ENCODE measurements at regions of chr7 and their contacts with region 1.

Region 1: DNA sequence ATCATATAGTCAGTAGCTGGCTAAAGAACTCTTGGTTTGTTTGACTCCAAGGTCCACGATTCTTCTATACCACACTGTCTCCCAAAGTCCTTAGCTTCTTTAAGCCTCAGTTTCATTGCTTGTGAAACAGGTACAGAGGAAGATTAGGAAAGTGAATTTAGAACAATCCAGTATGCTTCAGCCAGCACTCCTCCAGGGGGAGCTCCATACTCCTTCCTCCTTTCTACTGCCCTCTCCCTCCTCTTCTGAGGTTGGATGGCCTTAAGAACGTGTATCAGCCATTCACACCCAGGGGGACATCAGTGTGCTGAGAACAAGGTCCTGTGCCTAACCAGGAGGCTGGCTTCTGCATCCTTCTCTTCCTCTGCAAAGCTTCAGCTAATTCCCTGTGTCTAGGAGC is 54.8 kb upstream of the CALD1 start:
- DNase-seq: peak; percentile 56
- H3K4me3 ChIP-seq: no peak overlapping the region
- H3K27ac ChIP-seq: no peak overlapping the region
- H3K4me1 ChIP-seq: no peaks in the 10 kb centered on the region
- H3K27me3 ChIP-seq: no peaks in the 10 kb centered on the region
- CTCF ChIP-seq: peak; percentile 58 to 72
- POLR2A ChIP-seq: no peak

Region 2: GRCh38 chr7:134480736-134481135 is 243.9 kb before region 1 on chr7:
- CTCF ChIA-PET with region 1: no interaction called
- POLR2A ChIA-PET with region 1: no interaction called
- dilution Hi-C with region 1: no loop called
- intact Hi-C with region 1: no loop called
- DNase-seq: peak; percentile 71
- H3K4me3 ChIP-seq: no peak overlapping the region
- H3K27ac ChIP-seq: peak overlapping the region; percentile 9
- H3K4me1 ChIP-seq: peaks cover 16% of the 10 kb centered on the region
- H3K27me3 ChIP-seq: no peaks in the 10 kb centered on the region
- CTCF ChIP-seq: no peak
- POLR2A ChIP-seq: no peak

Region 3: GRCh38 chr7:134669845-134670373 is 54.7 kb before region 1 on chr7:
- CTCF ChIA-PET with region 1: no interaction called
- POLR2A ChIA-PET with region 1: no interaction called
- dilution Hi-C with region 1: no loop called
- intact Hi-C with region 1: loop called (anchors 1 kb)
- DNase-seq: peak; percentile 99
- H3K4me3 ChIP-seq: peak overlapping the region in 1 of 3 experiments; percentile 10
- H3K27ac ChIP-seq: peak overlapping the region; percentile 100
- H3K4me1 ChIP-seq: peaks cover 50% of the 10 kb centered on the region
- H3K27me3 ChIP-seq: no peaks in the 10 kb centered on the region
- CTCF ChIP-seq: no peak
- POLR2A ChIP-seq: no peak

Region 4: DNA sequence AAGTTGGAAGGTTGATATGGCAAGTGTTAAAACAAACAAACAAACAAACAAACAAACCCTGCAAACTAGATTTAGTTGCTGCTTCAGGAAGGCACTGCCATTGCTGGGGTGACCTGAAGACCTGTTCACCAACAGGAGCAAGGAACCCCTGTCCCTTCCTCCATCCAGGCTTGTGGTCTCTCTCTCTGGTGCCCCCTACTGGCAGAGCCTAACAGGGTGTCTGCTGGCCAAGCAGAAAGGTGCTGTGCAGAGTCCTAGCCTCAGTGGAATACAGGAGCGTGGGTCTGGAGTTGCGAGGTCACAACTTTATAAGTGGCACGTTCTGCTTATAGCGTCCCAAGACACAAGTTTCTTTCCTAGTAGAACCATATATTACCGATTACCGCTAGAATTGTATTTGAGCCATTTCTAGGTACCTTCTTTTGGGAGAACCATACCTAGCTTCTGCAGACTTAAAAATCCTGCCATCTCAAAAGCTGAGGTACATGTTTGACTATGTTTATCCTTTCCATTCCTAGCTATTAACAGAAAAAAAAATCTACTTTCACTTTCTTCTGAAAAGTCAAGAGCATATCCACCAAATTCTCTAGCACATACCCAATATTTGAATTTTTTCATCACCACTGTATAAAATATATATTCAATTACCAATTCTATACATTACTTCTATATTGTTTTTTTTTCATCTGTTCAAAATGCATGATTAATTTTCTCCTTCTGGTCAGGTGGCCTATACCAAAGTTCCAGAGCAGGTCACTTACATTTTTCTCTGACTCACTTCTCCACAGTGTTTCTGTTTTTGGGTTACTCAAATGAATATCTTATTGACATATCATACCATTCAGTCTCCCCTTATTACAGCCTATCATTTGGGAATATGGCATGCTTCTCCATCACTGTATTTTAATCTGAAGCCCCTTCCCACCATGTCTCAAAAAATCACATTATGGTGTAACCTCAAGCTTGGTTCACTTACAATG is 25.8 kb after region 1 on chr7:
- CTCF ChIA-PET with region 1: interaction called, 39 read pairs
- POLR2A ChIA-PET with region 1: no interaction called
- dilution Hi-C with region 1: no loop called
- intact Hi-C with region 1: loop called (anchors 1 kb)
- DNase-seq: peak; percentile 51
- H3K4me3 ChIP-seq: no peak overlapping the region
- H3K27ac ChIP-seq: no peak overlapping the region
- H3K4me1 ChIP-seq: no peaks in the 10 kb centered on the region
- H3K27me3 ChIP-seq: no peaks in the 10 kb centered on the region
- CTCF ChIP-seq: peak; percentile 68 to 76
- POLR2A ChIP-seq: no peak

Region 5: GRCh38 chr7:134891262-134891695 is 166.7 kb after region 1 on chr7:
- CTCF ChIA-PET with region 1: interaction called, 7 read pairs
- POLR2A ChIA-PET with region 1: no interaction called
- dilution Hi-C with region 1: no loop called
- intact Hi-C with region 1: loop called (anchors 5 kb)
- DNase-seq: no peak
- H3K4me3 ChIP-seq: no peak overlapping the region
- H3K27ac ChIP-seq: no peak overlapping the region
- H3K4me1 ChIP-seq: peaks cover 18% of the 10 kb centered on the region
- H3K27me3 ChIP-seq: no peaks in the 10 kb centered on the region
- CTCF ChIP-seq: no peak
- POLR2A ChIP-seq: no peak

Region 6: DNA sequence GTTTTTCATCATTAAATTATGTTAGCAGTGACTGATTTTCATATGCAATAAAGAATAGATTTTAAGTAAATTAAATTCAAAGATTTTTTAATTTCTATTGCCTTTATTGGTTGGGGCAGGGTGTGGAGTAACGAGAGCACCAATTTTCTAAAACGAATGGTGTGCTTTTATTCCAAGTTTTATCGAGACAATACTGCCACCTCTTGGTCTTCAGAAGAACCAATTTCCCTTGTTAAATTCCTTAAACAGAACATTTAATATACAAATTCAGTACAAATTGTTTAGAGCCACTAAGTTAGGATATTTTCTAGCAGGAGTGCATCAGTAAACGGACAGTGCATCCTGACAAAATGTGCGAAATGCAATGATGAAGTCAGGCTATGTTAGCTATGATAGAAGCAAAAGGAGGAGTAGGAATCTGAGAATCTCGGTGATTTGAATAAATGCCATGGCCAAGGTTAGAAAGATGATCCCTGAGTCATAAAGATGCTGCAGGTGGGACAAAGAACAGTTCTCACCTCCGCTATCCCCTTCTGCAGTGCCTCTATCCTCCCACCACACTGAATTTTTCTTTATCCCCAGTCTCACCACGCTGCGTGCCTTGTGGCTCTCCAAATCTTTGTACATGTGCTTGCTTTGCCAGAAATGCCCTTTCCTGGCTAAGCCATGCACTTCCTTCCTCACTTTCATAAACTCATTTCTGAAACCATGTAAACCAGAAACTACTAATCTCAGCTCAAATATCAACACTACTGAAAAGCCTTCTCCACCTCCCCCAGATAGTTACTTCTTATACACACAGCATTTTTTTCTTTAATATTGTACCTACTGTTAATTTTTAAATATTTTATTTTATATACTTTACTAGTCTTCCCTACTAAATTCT is 229.8 kb after region 1 on chr7:
- CTCF ChIA-PET with region 1: interaction called, 13 read pairs
- POLR2A ChIA-PET with region 1: no interaction called
- dilution Hi-C with region 1: no loop called
- intact Hi-C with region 1: loop called (anchors 1 kb)
- DNase-seq: peak; percentile 38
- H3K4me3 ChIP-seq: no peak overlapping the region
- H3K27ac ChIP-seq: no peak overlapping the region
- H3K4me1 ChIP-seq: no peaks in the 10 kb centered on the region
- H3K27me3 ChIP-seq: no peaks in the 10 kb centered on the region
- CTCF ChIP-seq: peak; percentile 20 to 37
- POLR2A ChIP-seq: no peak

Measured in endothelial cell of umbilical vein (primary cell).